ENCODE measurements at regions of chr12 and their contacts with region 1.

Region 1: GRCh38 chr12:71746983-71747611 is 7.6 kb upstream of the RAB21 start:
- DNase-seq: peak; percentile 61
- H3K4me3 Mint-ChIP-seq: no peak overlapping the region
- H3K27ac Mint-ChIP-seq: no peak overlapping the region
- H3K4me1 Mint-ChIP-seq: no peaks in the 10 kb centered on the region
- H3K27me3 Mint-ChIP-seq: peaks cover 47% of the 10 kb centered on the region

Region 2: DNA sequence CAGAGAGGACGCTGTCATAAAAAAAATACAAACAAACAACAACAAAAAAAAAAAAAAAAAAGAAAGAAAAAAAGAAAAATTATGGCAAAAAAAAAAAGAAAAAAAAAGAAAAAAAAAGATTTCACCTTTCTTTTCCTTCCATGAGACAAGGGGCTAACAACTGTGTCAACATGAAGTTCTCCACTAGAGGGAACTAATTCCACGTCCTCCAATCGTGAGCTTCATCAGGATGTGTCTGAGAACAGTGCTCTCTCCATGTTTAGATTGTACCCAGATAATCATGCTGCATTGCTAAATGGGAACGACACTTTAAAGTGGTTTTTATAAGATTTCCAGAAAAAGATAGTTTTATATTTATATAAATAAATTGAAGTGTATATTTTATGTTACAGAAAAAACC is 1013.7 kb before region 1 on chr12:
- CTCF ChIA-PET with region 1: interaction called, 14 read pairs
- DNase-seq: peak; percentile 21
- H3K4me3 Mint-ChIP-seq: no peak overlapping the region
- H3K27ac Mint-ChIP-seq: no peak overlapping the region
- H3K4me1 Mint-ChIP-seq: no peaks in the 10 kb centered on the region
- H3K27me3 Mint-ChIP-seq: peaks cover 10% of the 10 kb centered on the region

Region 3: DNA sequence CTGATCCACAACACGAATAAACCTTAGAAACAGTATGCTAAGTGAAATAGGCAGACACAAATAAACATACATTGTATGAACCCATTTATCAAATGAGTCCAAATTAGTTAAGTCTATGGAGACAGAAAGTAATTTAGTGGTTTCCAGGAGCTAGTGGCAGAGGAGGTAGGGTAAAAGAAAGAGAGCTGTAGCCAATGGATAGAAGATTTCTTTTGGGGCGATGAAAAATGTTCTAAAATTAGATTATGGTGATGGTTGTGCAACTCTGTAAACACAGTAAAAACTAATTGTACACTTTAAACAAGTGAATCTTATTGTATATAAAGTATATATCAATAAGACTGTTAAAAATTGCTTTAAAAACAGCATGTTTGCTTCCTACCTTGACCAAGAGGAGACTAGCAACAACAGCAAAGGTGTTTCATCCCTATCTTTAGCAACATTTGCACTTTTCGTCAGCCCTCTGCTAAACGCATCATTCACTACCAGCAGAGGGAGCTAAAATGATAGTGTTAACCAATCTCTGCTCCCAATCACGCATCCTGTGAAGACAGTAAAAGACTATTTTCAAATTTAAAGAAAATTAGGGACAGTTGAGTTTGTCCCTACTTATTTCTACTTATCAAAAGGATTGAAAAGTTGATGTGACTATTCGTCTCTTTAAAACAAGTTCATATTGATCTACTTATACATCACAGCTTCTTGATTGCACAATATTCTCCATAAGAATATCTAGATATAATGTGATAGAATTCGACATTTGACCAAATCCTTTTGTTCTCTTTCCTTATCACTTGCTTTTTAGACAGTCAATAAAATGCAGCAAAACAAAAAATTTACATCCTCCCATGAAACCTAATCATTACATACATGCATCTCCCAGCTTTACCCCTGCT is 331.5 kb before region 1 on chr12:
- CTCF ChIA-PET with region 1: interaction called, 55 read pairs
- DNase-seq: peak; percentile 48
- H3K4me3 Mint-ChIP-seq: no peak overlapping the region
- H3K27ac Mint-ChIP-seq: no peak overlapping the region
- H3K4me1 Mint-ChIP-seq: no peaks in the 10 kb centered on the region
- H3K27me3 Mint-ChIP-seq: peaks cover 5% of the 10 kb centered on the region

Region 4: GRCh38 chr12:71636704-71637115 is 110.4 kb before region 1 on chr12:
- CTCF ChIA-PET with region 1: interaction called, 12 read pairs
- DNase-seq: no peak
- H3K4me3 Mint-ChIP-seq: no peak overlapping the region
- H3K27ac Mint-ChIP-seq: peak overlapping the region; percentile 17
- H3K4me1 Mint-ChIP-seq: peaks cover 6% of the 10 kb centered on the region
- H3K27me3 Mint-ChIP-seq: no peaks in the 10 kb centered on the region

Region 5: GRCh38 chr12:71663561-71664294 is 83.4 kb before region 1 on chr12 and contains the start of gene ZFC3H1:
- CTCF ChIA-PET with region 1: interaction called, 12 read pairs
- DNase-seq: peak; percentile 95
- H3K4me3 Mint-ChIP-seq: peak within 1 kb of the TSS; percentile 98
- H3K27ac Mint-ChIP-seq: peak within 1 kb of the TSS; percentile 100
- H3K4me1 Mint-ChIP-seq: peaks cover 53% of the 10 kb centered on the region
- H3K27me3 Mint-ChIP-seq: peaks cover 4% of the 10 kb centered on the region

Region 6: GRCh38 chr12:71685914-71686665 is 61.0 kb before region 1 on chr12 and contains the start of gene TMEM19:
- CTCF ChIA-PET with region 1: interaction called, 26 read pairs
- DNase-seq: peak; percentile 88
- H3K4me3 Mint-ChIP-seq: peak within 1 kb of the TSS; percentile 82
- H3K27ac Mint-ChIP-seq: peak within 1 kb of the TSS; percentile 91
- H3K4me1 Mint-ChIP-seq: peaks cover 46% of the 10 kb centered on the region
- H3K27me3 Mint-ChIP-seq: no peaks in the 10 kb centered on the region

Region 7: GRCh38 chr12:72173974-72174373 is 426.9 kb after region 1 on chr12:
- CTCF ChIA-PET with region 1: no interaction called
- DNase-seq: no peak
- H3K4me3 Mint-ChIP-seq: no peak overlapping the region
- H3K27ac Mint-ChIP-seq: no peak overlapping the region
- H3K4me1 Mint-ChIP-seq: no peaks in the 10 kb centered on the region
- H3K27me3 Mint-ChIP-seq: no peaks in the 10 kb centered on the region

Region 8: GRCh38 chr12:72197790-72198189 is 450.7 kb after region 1 on chr12:
- CTCF ChIA-PET with region 1: no interaction called
- DNase-seq: no peak
- H3K4me3 Mint-ChIP-seq: no peak overlapping the region
- H3K27ac Mint-ChIP-seq: no peak overlapping the region
- H3K4me1 Mint-ChIP-seq: no peaks in the 10 kb centered on the region
- H3K27me3 Mint-ChIP-seq: no peaks in the 10 kb centered on the region